ENCODE measurements at regions of chr7 and their contacts with region 1.

Region 1: DNA sequence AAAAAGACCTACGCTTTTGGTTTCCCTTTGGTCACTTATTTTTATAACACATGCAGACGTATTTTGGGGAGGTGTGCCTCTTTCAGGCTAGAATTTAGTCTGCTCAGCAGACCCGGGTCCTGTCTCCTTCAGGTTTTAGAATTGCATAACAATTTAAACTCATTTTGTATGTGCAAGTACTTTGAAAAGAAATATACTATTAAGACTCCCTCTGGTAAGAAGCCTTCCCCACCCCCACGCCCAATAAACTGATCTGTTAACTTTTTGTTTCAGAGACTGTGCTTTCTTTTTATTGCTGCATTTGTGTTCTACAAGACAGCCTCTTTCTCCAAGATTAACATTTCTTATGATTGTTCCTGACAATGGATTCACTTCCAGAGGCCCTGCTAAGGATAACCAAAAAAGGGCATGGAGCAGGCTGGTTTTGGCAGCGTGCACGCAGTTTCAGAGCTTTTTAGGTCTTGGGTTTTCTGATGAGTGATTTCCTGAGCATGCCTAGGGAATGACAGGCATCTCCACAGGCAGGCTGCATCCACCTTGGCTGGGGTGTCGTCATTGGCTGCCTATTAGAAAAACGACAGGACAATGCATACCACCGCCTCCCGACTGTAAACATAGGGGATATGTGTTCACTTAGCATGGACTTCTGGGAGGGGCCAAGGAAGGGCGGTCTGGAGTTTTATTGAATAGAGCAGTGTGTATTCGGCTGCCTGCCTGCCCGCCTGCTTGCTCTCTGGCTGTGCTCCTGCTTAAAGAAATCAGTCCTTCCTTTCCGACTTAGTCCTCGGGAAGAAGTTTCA is at the start of gene CALD1:
- DNase-seq: peak; percentile 66 to 83 (median 81)
- ATAC-seq: peak; percentile 89 to 94 (median 93)
- H3K4me3 ChIP-seq: peak within 1 kb of the TSS; percentile 36 to 75 (median 66)
- H3K27ac ChIP-seq: peak within 1 kb of the TSS; percentile 81 to 92 (median 88)
- H3K4me1 ChIP-seq: peaks cover 0 to 52% (median 33%) of the 10 kb centered on the region in 12 donors
- H3K27me3 ChIP-seq: no peaks in the 10 kb centered on the region
- CTCF ChIP-seq: no peak
- POLR2A ChIP-seq: peak in 1 of 2 donors; percentile 82
- total RNA-seq, gene CALD1: 89.6 to 186 (median 130) TPM

Region 2: GRCh38 chr7:134831862-134832261 is 52.7 kb after region 1 on chr7:
- intact Hi-C with region 1: loop called in 4 of 10 experiments (anchors 5 to 10 kb)
- DNase-seq: peak in 4 of 5 donors; percentile 27 to 68 (median 46)
- ATAC-seq: peak in 2 of 4 donors; percentile 10 to 12
- H3K4me3 ChIP-seq: peak overlapping the region in 6 of 12 donors; percentile 7 to 35 (median 21)
- H3K27ac ChIP-seq: peak overlapping the region in 10 of 12 donors; percentile 28 to 87 (median 58)
- H3K4me1 ChIP-seq: peaks cover 0 to 94% (median 55%) of the 10 kb centered on the region in 12 donors
- H3K27me3 ChIP-seq: no peaks in the 10 kb centered on the region
- CTCF ChIP-seq: no peak
- POLR2A ChIP-seq: no peak

Region 3: DNA sequence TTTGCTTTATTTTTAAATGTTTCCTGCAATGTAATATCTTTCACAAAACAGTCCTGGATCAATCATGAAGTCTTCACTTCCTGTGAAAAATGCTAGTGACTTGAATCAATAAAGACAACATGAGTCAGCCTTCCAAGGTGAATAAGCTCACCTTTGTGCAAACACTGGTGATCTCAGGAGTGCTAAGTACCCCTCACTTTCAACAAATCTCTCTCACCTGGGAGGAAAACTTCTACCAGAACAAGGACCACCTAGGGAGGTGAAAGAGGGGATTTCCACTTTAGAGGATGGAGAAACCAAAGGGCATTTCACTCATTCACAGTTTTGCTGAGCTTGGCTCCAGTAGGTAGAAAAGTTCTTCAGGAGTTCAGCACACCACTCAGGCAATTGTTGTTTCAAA is 65.1 kb after region 1 on chr7:
- intact Hi-C with region 1: loop called in 4 of 10 experiments (anchors 5 to 10 kb)
- DNase-seq: no peak
- ATAC-seq: no peak
- H3K4me3 ChIP-seq: no peak overlapping the region
- H3K27ac ChIP-seq: peak overlapping the region in 4 of 12 donors; percentile 70 to 77 (median 73)
- H3K4me1 ChIP-seq: peaks cover 0 to 84% (median 54%) of the 10 kb centered on the region in 12 donors
- H3K27me3 ChIP-seq: no peaks in the 10 kb centered on the region
- CTCF ChIP-seq: no peak
- POLR2A ChIP-seq: no peak

Region 4: GRCh38 chr7:134891262-134891695 is 112.1 kb after region 1 on chr7:
- intact Hi-C with region 1: loop called in 6 of 10 experiments (anchors 1 to 10 kb)
- DNase-seq: peak; percentile 88 to 92 (median 88)
- ATAC-seq: peak; percentile 88 to 93 (median 91)
- H3K4me3 ChIP-seq: peak overlapping the region; percentile 41 to 70 (median 60)
- H3K27ac ChIP-seq: peak overlapping the region; percentile 69 to 94 (median 84)
- H3K4me1 ChIP-seq: peaks cover 8 to 71% (median 46%) of the 10 kb centered on the region in 12 donors
- H3K27me3 ChIP-seq: no peaks in the 10 kb centered on the region
- CTCF ChIP-seq: no peak
- POLR2A ChIP-seq: peak in 1 of 2 donors; percentile 36

Region 5: GRCh38 chr7:134932707-134933370 is 153.7 kb after region 1 on chr7:
- intact Hi-C with region 1: loop called in 6 of 10 experiments (anchors 5 to 10 kb)
- DNase-seq: peak; percentile 57 to 77 (median 60)
- ATAC-seq: peak; percentile 81 to 90 (median 88)
- H3K4me3 ChIP-seq: peak overlapping the region in 7 of 12 donors; percentile 0 to 32 (median 14)
- H3K27ac ChIP-seq: peak overlapping the region in 11 of 12 donors; percentile 38 to 84 (median 75)
- H3K4me1 ChIP-seq: peaks cover 0 to 66% (median 48%) of the 10 kb centered on the region in 12 donors
- H3K27me3 ChIP-seq: no peaks in the 10 kb centered on the region
- CTCF ChIP-seq: no peak
- POLR2A ChIP-seq: no peak

Region 6: DNA sequence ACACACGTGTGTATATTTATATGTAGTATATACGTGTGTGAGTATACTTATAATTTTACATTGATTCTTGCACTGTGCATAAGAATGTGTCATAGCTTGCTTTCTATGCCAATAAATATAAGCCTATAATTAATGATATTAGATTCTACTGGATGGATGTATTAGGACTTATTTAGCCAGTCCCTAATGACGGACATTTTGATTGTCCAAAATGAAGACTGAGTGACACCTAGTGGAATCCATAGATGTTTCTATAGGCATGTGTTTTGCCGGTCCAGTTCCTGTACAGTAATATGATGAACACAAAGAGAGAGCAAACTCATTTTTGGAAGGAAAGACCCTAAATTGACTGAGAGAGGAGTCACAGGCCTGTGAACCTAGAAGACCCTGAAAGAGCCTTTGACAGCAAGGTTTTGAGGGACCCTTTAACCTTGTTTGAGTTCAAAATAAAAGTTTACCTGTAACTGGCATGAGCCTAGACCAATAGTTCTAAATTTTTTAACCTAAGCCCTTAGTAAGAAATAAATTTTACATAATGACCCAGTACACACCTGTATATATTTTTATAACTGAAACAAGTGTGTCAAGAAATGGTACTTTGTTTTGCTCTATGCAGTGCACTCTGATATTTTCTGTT is 164.7 kb after region 1 on chr7:
- intact Hi-C with region 1: loop called in 9 of 10 experiments (anchors 5 to 10 kb)
- DNase-seq: no peak
- ATAC-seq: peak in 3 of 4 donors; percentile 44 to 53 (median 49)
- H3K4me3 ChIP-seq: no peak overlapping the region
- H3K27ac ChIP-seq: peak overlapping the region in 1 of 12 donors; percentile 7
- H3K4me1 ChIP-seq: peaks cover 0 to 21% (median 8%) of the 10 kb centered on the region in 12 donors
- H3K27me3 ChIP-seq: no peaks in the 10 kb centered on the region
- CTCF ChIP-seq: peak in 11 of 12 donors; percentile 12 to 65 (median 43)
- POLR2A ChIP-seq: no peak

Region 7: DNA sequence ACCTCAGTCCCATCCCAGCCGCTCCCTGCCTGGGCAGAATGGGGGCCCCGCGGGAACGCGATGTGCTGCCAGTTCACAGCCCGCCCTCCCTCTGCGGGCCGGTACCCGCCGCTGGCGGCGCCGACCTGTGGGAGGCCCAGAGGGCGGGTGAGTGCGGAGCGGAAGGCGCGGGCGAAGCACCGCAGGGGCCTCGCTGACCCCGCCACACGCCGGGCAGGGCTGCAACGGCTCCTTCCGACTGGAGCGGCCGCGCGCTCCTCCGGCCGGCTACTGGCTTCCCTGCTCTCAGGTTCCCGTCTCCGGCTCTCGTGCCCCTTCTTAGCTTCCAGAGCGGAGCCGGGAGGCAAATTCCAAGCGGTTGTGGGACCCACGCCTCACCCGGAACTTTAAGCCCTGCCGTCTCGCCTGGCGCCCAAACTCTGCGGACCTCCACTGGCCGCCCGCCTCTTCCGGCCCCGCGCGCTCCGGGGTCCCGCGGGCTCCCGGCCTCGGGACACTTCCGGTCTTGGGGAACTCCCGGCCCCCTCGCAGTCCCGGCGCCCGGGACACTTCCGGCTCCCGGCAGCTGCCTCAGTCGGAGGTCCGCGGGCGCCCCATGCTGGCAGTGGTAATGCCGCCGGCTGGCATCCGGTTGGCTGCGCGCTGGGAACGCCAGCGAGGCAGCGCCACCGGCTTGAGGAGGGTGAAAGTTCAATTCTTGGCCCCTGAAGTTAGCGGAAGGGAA is 391.3 kb after region 1 on chr7 and contains the start of gene CYREN:
- intact Hi-C with region 1: loop called in 2 of 10 experiments (anchors 10 kb)
- DNase-seq: peak; percentile 96 to 98 (median 97)
- ATAC-seq: peak; percentile 89 to 97 (median 95)
- H3K4me3 ChIP-seq: peak within 1 kb of the TSS; percentile 68 to 99 (median 87)
- H3K27ac ChIP-seq: peak within 1 kb of the TSS; percentile 83 to 100 (median 97)
- H3K4me1 ChIP-seq: peaks cover 9 to 63% (median 49%) of the 10 kb centered on the region in 12 donors
- H3K27me3 ChIP-seq: no peaks in the 10 kb centered on the region
- CTCF ChIP-seq: peak; percentile 42 to 93 (median 75)
- POLR2A ChIP-seq: peak in 1 of 2 donors; percentile 67
- total RNA-seq, gene CYREN: 18.4 to 35.8 (median 24.9) TPM